GM10248 (cell line): ENCODE measurements at regions of chr2 and their contacts with region 1.

Region 1: GRCh38 chr2:130797493-130798435 is 39.0 kb upstream of the ARHGEF4 start:
- DNase-seq: peak; percentile 91
- CTCF ChIP-seq: peak; percentile 99

Region 2: GRCh38 chr2:130807659-130808385 is 10.1 kb after region 1 on chr2:
- CTCF ChIA-PET with region 1: interaction called, 10 read pairs
- POLR2A ChIA-PET with region 1: no interaction called
- DNase-seq: no peak
- CTCF ChIP-seq: no peak

Region 3: GRCh38 chr2:130824492-130825061 is 26.8 kb after region 1 on chr2:
- CTCF ChIA-PET with region 1: interaction called, 45 read pairs
- POLR2A ChIA-PET with region 1: no interaction called
- DNase-seq: peak; percentile 87
- CTCF ChIP-seq: no peak

Region 4: GRCh38 chr2:130850788-130851623 is 53.2 kb after region 1 on chr2:
- CTCF ChIA-PET with region 1: interaction called, 15 read pairs
- POLR2A ChIA-PET with region 1: no interaction called
- DNase-seq: no peak
- CTCF ChIP-seq: no peak

Region 5: GRCh38 chr2:130884503-130884902 is 86.7 kb after region 1 on chr2:
- CTCF ChIA-PET with region 1: interaction called, 20 read pairs
- POLR2A ChIA-PET with region 1: no interaction called
- DNase-seq: no peak
- CTCF ChIP-seq: no peak

Region 6: DNA sequence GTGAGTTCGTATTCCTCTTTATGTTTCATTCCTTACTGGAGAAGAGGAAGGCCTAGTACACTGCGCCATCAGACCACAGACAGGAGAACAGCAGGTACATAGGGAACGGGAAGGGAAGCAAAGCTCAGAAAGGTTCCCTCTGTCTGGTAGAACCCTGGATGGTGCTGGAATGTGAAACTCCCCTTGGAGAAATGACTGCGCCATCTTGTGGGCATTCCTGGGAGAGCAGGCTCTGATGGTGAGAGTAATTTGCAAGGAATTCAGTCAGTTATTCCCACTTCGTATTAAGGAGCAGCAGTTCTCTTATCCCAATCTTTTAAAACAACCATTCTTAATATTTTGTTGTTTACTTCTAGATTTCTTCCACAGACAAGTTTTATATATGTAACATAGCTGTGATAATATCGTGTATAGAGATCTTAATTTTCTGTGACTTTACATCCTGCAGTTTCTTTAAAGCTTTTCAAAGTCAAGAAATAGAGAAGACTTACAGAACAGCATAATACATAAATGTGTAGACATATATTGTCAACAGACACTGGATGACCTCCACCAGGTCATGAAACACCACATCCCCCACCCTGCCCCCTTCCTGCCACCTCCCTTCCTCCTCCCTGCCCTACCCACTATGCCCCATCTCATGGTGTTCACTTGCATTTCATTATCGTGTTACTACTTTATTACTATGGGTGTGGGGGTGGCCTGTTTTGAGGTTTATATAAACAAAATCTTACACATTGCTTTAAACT is 122.8 kb after region 1 on chr2:
- CTCF ChIA-PET with region 1: interaction called, 74 read pairs
- POLR2A ChIA-PET with region 1: no interaction called
- DNase-seq: peak; percentile 66
- CTCF ChIP-seq: peak; percentile 83